ENCODE measurements at regions of chr3 and their contacts with region 1.

Region 1: DNA sequence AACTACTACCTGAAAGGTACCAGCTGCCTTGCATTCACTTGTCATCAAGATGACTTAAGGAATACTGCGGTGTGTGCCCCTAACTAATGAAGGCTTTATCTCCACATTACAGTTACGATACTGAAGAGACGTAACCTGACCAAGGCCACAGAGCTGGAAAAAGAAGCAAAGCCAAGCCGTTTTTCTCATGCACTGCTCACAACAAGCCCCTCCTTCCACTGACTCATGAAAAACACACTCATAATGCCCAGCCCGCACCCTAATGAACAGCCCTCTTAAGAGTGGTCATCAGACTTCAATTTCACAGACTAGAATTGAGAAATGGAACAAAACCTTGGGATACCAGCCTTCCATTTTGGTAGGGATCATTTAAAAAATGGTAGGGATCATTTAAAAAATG is 11.6 kb downstream of the PSMD6 start:
- DNase-seq: peak in 1 of 3 donors; percentile 14
- H3K4me3 ChIP-seq: no peak overlapping the region
- H3K27ac ChIP-seq: peak overlapping the region in 1 of 2 experiments; percentile 29
- H3K4me1 ChIP-seq: no peaks in the 10 kb centered on the region
- H3K27me3 ChIP-seq: no peaks in the 10 kb centered on the region

Region 2: GRCh38 chr3:62873761-62874647 is 1137.7 kb before region 1 on chr3:
- CTCF ChIA-PET with region 1: no interaction called
- POLR2A ChIA-PET with region 1: no interaction called
- DNase-seq: peak in 2 of 3 donors; percentile 15 to 20
- H3K4me3 ChIP-seq: peak overlapping the region in 6 of 7 experiments; percentile 17 to 67 (median 35)
- H3K27ac ChIP-seq: no peak overlapping the region
- H3K4me1 ChIP-seq: peaks cover 0 to 18% (median 9%) of the 10 kb centered on the region in 4 experiments
- H3K27me3 ChIP-seq: peaks cover 25 to 74% (median 30%) of the 10 kb centered on the region in 5 experiments

Region 3: GRCh38 chr3:63911873-63912767 is 99.6 kb before region 1 on chr3 and contains the start of gene SCAANT1:
- CTCF ChIA-PET with region 1: no interaction called
- POLR2A ChIA-PET with region 1: no interaction called
- DNase-seq: peak; percentile 86 to 94 (median 93)
- H3K4me3 ChIP-seq: peak within 1 kb of the TSS; percentile 73 to 92 (median 79)
- H3K27ac ChIP-seq: peak within 1 kb of the TSS; percentile 70 to 81
- H3K4me1 ChIP-seq: peaks cover 11 to 29% (median 21%) of the 10 kb centered on the region in 4 experiments
- H3K27me3 ChIP-seq: no peaks in the 10 kb centered on the region

Region 4: GRCh38 chr3:63967675-63968611 is 43.7 kb before region 1 on chr3:
- CTCF ChIA-PET with region 1: interaction called, 12 read pairs
- POLR2A ChIA-PET with region 1: no interaction called
- DNase-seq: peak; percentile 84 to 97 (median 94)
- H3K4me3 ChIP-seq: peak overlapping the region; percentile 33 to 77 (median 71)
- H3K27ac ChIP-seq: peak overlapping the region; percentile 91 to 96
- H3K4me1 ChIP-seq: peaks cover 40 to 71% (median 55%) of the 10 kb centered on the region in 4 experiments
- H3K27me3 ChIP-seq: no peaks in the 10 kb centered on the region

Region 5: GRCh38 chr3:63993653-63994079 is 18.0 kb before region 1 on chr3:
- CTCF ChIA-PET with region 1: interaction called, 66 read pairs
- POLR2A ChIA-PET with region 1: interaction called, 3 read pairs
- DNase-seq: peak; percentile 67 to 78 (median 76)
- H3K4me3 ChIP-seq: no peak overlapping the region
- H3K27ac ChIP-seq: no peak overlapping the region
- H3K4me1 ChIP-seq: no peaks in the 10 kb centered on the region
- H3K27me3 ChIP-seq: no peaks in the 10 kb centered on the region

Region 6: GRCh38 chr3:64023187-64023848 is 11.6 kb after region 1 on chr3 and contains the start of gene PSMD6:
- CTCF ChIA-PET with region 1: interaction called, 13 read pairs
- POLR2A ChIA-PET with region 1: interaction called, 9 read pairs
- DNase-seq: peak; percentile 90 to 94 (median 93)
- H3K4me3 ChIP-seq: peak within 1 kb of the TSS; percentile 75 to 98 (median 94)
- H3K27ac ChIP-seq: peak within 1 kb of the TSS; percentile 91 to 95
- H3K4me1 ChIP-seq: peaks cover 8 to 20% (median 12%) of the 10 kb centered on the region in 4 experiments
- H3K27me3 ChIP-seq: peaks cover 2 to 13% (median 10%) of the 10 kb centered on the region in 5 experiments

Region 7: DNA sequence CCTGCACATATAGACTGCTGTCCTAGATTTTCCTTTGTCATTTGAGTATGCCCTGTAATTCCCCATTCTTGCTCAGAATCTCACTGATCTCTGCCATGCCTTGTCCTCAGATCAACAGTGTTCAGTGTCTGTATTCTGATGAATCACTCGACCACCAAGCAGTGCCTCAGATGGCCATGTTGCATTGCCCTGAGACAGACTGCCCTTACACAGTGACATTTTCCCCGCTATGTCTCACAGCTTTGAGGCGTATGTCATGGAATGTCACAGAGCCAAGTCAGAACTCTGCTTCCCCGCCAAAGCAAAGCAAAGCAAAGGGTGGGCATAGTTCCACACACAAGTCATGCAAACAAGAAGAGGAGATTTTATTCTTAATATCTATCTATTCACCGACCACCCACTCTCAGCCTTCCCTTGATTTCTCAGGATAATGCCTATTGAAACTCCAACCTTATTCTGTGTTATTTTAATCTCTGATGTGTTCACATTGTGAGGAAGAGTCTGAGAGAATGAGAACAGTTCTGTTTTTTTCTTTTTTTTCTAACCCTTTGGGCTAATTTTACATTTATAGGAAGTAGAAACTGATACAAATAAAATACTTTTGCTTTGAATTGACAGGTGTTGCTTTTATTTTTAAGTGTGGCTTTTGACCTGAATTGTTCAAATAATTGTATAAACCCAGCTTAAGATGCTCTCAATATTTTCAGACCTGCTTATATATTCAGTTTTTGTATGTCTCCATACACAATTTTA is 28.5 kb after region 1 on chr3:
- CTCF ChIA-PET with region 1: no interaction called
- POLR2A ChIA-PET with region 1: no interaction called
- DNase-seq: no peak
- H3K4me3 ChIP-seq: no peak overlapping the region
- H3K27ac ChIP-seq: no peak overlapping the region
- H3K4me1 ChIP-seq: no peaks in the 10 kb centered on the region
- H3K27me3 ChIP-seq: peaks cover 5 to 20% (median 12%) of the 10 kb centered on the region in 5 experiments

Measured in common myeloid progenitor, CD34-positive (primary cell).